ENCODE measurements at regions of chrX and their contacts with region 1.

Region 1: DNA sequence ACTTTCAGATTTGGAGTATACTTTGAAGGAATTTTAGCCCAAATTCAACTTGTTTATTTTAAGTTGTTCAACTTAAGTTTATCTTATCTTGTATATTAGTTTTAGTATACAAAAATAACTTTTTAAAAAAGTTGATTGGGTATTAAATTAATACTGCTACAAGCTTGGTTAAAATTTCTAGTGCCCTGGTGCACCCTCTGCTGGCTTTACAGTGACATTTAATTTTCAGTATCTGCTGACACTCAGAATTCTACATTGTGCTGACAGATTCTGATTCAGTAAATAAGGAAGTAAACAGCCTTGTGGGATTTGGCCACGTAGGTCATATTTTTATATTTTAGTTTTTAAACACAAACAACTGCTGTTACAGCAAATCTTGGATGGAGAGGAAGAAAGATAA is 2.9 kb downstream of the EDA start:
- DNase-seq: peak; percentile 14

Region 2: GRCh38 chrX:69524781-69525363 is 93.9 kb before region 1 on chrX:
- CTCF ChIA-PET with region 1: no interaction called
- POLR2A ChIA-PET with region 1: no interaction called
- DNase-seq: no peak

Region 3: GRCh38 chrX:69538321-69538876 is 80.4 kb before region 1 on chrX:
- CTCF ChIA-PET with region 1: interaction called, 11 read pairs
- POLR2A ChIA-PET with region 1: no interaction called
- DNase-seq: peak; percentile 87

Region 4: DNA sequence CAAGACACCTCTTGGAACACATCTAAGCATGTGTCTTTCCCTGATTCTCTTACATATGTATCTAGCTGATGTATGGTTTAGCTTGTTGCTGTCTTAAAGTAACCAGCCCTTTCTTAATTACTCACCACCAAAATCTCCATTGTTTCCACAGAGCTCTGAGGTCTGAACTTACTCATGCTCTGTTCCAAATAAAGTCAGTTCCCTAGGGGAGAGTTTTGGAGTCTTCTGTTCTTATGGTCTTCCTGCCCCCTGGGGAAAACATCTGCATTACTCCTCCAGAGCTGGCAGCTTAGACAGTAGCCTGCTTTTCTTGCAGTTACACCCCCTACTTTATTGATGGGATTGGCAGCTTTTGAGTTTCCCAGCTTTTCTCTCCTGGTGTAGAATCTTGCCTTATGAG is 122.9 kb after region 1 on chrX:
- CTCF ChIA-PET with region 1: no interaction called
- POLR2A ChIA-PET with region 1: no interaction called
- DNase-seq: no peak